ENCODE measurements at regions of chr3 and their contacts with region 1.

Region 1: DNA sequence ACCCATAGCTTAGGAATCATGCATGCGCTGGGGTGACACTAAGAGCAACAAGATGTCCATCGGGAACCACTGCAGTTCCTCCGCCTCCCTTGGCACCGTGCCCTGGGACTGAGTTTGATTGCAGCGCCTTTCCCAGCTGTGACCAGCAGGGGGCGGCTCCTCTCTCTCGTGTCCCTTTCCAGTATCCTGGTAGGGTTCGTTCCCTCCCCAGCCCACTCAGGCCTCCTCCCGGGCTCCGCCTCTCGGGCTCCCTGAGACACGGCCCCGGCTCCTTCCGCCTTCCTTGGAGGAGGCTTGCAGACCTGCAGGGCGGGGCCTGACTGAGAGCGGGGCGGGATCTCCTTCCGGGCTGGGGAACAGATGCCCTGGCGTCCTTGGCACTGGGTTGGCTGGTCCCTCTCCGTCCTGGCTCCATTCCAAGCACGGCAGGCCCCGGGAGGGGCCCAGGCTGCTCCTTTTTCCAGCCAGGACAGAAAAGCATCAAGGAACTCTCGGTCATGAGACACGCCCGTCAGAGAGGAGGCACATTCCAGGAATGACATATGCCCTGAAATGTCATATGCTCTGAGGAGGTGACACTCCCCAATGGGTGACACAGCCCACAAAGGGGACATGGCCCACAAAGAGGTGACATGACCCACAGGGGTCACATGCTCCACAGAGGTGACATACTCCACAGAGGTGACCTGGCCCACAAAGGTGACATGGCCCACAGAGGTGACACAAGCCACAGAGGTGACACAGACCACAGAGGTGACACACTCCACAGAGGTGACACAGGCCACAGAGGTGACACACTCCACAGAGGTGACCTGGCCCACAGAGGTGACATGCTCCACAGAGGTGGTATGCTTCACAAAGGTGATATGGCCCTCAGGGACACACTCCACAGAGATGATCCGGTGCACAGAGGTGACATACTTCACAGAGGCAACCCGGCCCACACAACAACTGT is 79.0 kb downstream of the ABHD5 start:
- DNase-seq: peak; percentile 91 to 99
- H3K4me3 ChIP-seq: peak overlapping the region; percentile 6 to 48
- H3K27ac ChIP-seq: peak overlapping the region; percentile 92 to 94
- H3K4me1 ChIP-seq: peaks cover 7 to 32% of the 10 kb centered on the region in 2 donors
- H3K27me3 ChIP-seq: no peaks in the 10 kb centered on the region
- CTCF ChIP-seq: peak; percentile 89 to 91 (median 90)

Region 2: DNA sequence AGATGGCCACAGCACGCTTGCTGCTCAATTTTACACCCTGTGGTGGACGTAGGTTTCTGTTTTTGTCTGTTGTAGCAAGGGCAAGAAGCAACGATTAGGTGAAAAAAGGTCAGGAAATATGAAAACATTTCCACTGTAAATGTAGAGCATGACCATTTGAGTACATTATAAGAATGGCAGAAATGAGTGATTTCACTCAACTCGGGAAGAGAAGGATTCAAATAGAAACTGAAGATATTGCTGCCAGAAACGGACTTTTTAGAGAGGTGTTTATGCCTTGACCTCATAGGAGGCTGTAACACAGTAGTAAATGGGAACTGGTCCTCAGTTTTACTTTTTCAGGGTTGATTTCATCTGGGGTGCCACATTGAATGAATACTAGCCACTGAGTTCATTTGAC is 823.7 kb before region 1 on chr3:
- intact Hi-C with region 1: no loop called
- DNase-seq: no peak
- H3K4me3 ChIP-seq: no peak overlapping the region
- H3K27ac ChIP-seq: no peak overlapping the region
- H3K4me1 ChIP-seq: no peaks in the 10 kb centered on the region
- H3K27me3 ChIP-seq: no peaks in the 10 kb centered on the region
- CTCF ChIP-seq: no peak

Region 3: DNA sequence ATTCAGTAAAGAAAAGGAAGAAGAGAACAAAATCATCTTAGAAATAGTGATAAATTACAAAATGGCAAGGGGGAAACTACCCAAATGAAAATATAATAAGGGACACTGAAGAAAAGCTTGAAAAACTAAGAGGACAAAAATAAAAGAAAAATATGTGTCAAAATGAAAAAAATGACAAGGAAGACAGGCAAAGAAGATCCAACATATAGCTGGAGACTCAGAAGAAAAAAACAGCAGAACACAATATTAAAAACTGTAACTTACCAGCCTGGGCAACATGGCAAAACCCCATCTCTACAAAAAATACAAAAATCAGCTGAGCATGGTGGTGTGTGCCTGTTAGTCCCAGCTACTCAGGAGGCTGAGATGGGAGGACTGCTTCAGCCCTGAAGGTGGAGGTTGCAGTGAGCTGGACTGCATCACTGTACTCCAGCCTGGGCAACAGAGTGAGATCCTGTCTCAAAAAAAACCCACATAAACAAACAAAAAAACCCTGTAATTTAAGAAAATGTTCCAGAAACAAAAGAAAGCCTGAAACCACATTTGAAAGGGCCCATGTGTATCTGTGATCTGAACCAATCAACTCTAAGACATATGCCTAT is 241.1 kb before region 1 on chr3:
- intact Hi-C with region 1: no loop called
- DNase-seq: no peak
- H3K4me3 ChIP-seq: no peak overlapping the region
- H3K27ac ChIP-seq: no peak overlapping the region
- H3K4me1 ChIP-seq: no peaks in the 10 kb centered on the region
- H3K27me3 ChIP-seq: no peaks in the 10 kb centered on the region
- CTCF ChIP-seq: no peak

Region 4: GRCh38 chr3:43540624-43541023 is 229.1 kb before region 1 on chr3:
- intact Hi-C with region 1: loop called (anchors 10 kb)
- DNase-seq: no peak
- H3K4me3 ChIP-seq: no peak overlapping the region
- H3K27ac ChIP-seq: no peak overlapping the region
- H3K4me1 ChIP-seq: no peaks in the 10 kb centered on the region
- H3K27me3 ChIP-seq: no peaks in the 10 kb centered on the region
- CTCF ChIP-seq: no peak

Region 5: GRCh38 chr3:43690400-43691119 is 79.2 kb before region 1 on chr3 and contains the start of gene ABHD5:
- intact Hi-C with region 1: loop called (anchors 1 kb)
- DNase-seq: peak; percentile 55 to 92
- H3K4me3 ChIP-seq: peak within 1 kb of the TSS; percentile 81 to 96
- H3K27ac ChIP-seq: peak within 1 kb of the TSS; percentile 89 to 94
- H3K4me1 ChIP-seq: peaks cover 0 to 11% of the 10 kb centered on the region in 2 donors
- H3K27me3 ChIP-seq: no peaks in the 10 kb centered on the region
- CTCF ChIP-seq: peak in 1 of 3 experiments; percentile 28
- total RNA-seq, gene ABHD5: 5.3 TPM

Region 6: DNA sequence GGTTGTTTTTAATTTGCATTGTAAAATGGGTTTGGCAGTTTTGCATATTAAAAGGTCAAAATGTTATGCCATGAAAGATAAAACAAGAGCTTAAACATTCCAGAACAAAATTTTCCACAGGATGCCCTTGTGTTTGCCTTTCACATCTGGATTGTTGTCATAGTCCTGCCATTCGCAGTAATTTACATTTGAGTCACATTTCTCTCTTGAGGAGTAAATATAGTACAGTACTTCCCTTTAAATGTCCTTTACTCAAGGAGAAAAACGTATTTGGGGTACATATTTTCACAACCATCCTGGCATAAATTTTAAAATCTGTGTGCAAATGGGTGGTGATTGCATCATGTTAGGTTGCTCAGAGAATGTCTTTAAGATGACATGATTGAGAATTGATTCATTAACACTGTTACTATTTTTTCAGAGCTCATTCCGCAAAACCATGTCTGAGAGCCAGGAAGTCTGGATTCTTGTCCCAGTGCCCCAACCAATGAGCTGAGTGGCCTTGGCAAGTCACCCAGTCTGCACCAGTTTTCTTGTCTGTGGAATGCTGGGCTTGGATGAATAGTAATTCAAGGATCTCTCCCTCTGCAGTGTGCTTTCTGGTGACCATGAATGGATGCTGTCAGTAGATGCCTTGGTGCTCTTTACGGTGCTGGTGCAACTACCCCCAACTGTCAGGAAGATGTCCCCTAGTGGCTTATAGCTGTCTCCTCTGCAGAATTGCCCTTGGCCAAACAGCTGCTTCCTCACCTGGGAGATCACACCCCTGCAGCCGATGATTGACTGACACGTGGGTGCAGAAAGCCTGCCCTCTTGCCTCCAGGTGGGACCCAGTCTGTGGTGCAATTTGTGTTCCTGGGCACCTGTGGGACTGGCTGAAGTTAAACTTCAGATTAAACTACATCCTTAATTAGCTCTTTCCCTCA is 36.0 kb before region 1 on chr3:
- intact Hi-C with region 1: loop called (anchors 1 kb)
- DNase-seq: peak; percentile 19 to 91
- H3K4me3 ChIP-seq: no peak overlapping the region
- H3K27ac ChIP-seq: peak overlapping the region; percentile 72 to 82
- H3K4me1 ChIP-seq: peaks cover 6 to 34% of the 10 kb centered on the region in 2 donors
- H3K27me3 ChIP-seq: no peaks in the 10 kb centered on the region
- CTCF ChIP-seq: no peak

Region 7: DNA sequence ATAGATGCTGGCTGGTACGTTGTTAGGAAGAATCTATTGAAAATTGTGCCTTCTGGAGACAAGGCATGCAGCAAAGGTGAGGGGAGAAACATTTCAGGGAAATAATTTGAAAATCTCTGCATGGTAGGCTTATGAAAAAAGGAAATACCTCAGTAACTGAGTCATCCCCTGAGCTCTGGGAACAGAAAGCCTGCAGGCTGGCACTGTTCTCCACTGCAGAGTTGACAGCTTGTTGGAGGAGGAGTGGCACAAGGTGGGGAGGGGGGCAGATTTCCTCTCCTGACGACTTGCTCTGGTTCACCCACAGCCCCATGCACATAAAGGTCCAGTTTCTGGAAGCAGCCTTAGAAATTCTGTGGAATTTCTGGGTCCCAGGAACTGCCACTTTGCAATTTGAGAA is 100.4 kb after region 1 on chr3:
- intact Hi-C with region 1: loop called (anchors 5 kb)
- DNase-seq: peak in 1 of 2 donors; percentile 78
- H3K4me3 ChIP-seq: no peak overlapping the region
- H3K27ac ChIP-seq: peak overlapping the region; percentile 79 to 85
- H3K4me1 ChIP-seq: peaks cover 11 to 37% of the 10 kb centered on the region in 2 donors
- H3K27me3 ChIP-seq: no peaks in the 10 kb centered on the region
- CTCF ChIP-seq: no peak

Region 8: GRCh38 chr3:43998836-43999727 is 229.3 kb after region 1 on chr3:
- intact Hi-C with region 1: loop called (anchors 10 kb)
- DNase-seq: no peak
- H3K4me3 ChIP-seq: peak overlapping the region; percentile 45 to 75
- H3K27ac ChIP-seq: no peak overlapping the region
- H3K4me1 ChIP-seq: peaks cover 15 to 39% of the 10 kb centered on the region in 2 donors
- H3K27me3 ChIP-seq: peaks cover 24% of the 10 kb centered on the region
- CTCF ChIP-seq: no peak

Region 9: GRCh38 chr3:44861412-44862220 is 1091.9 kb after region 1 on chr3 and contains the start of gene TMEM42:
- intact Hi-C with region 1: no loop called
- DNase-seq: peak; percentile 55 to 95
- H3K4me3 ChIP-seq: peak within 1 kb of the TSS; percentile 67 to 89
- H3K27ac ChIP-seq: peak within 1 kb of the TSS; percentile 91 to 96
- H3K4me1 ChIP-seq: peaks cover 0 to 11% of the 10 kb centered on the region in 2 donors
- H3K27me3 ChIP-seq: no peaks in the 10 kb centered on the region
- CTCF ChIP-seq: peak in 2 of 3 experiments; percentile 4 to 40
- total RNA-seq, gene TMEM42: not detected

Measured in ascending aorta (tissue), 2 donors.